Cardiac septum (tissue), 1 donor: ENCODE measurements at regions of chr7 and their contacts with region 1.

Region 1: DNA sequence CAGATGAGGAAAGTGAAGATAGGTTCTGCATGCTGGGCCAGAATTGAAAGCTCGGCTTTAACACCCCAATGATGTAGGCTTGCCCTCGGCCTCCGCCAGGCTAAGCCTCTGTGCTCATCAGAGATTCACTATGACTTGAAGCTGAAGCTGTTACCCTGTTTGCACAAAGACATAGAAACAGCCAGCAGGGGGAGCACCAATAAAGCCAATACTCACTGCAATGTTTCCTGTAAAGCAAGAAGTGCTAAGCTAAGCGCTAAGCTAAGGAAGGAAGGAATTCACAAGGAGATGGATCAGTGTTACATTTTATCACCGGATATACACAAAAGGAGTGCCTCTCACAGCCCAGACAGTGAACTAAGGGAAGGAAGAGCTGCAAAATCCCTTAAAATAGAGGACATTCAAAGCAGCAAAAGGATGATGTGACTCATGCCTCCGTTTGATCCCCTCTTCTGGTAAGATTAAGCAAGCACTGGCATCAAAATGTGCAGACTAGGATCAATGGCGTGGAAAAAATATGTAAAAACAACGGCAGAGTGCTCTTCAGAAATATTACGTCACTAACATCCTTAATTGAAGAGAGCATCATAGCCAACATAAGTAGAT is 153.8 kb downstream of the COBL start:
- DNase-seq: no peak

Region 2: GRCh38 chr7:50467817-50468610 is 694.8 kb before region 1 on chr7:
- intact Hi-C with region 1: loop called (anchors 5 kb)
- DNase-seq: peak; percentile 91

Region 3: GRCh38 chr7:51376420-51377092 is 213.7 kb after region 1 on chr7:
- intact Hi-C with region 1: no loop called
- DNase-seq: no peak